Transverse colon (tissue), 4 donors: ENCODE measurements at regions of chr13 and their contacts with region 1.

Region 1: GRCh38 chr13:102773441-102774215 is at the start of gene TEX30:
- DNase-seq: peak; percentile 86
- H3K4me3 ChIP-seq: peak within 1 kb of the TSS; percentile 72 to 90 (median 82)
- H3K27ac ChIP-seq: peak within 1 kb of the TSS; percentile 81 to 92 (median 90)
- H3K4me1 ChIP-seq: peaks cover 0 to 13% (median 11%) of the 10 kb centered on the region in 4 donors
- H3K27me3 ChIP-seq: no peaks in the 10 kb centered on the region
- CTCF ChIP-seq: peak in 1 of 5 experiments; percentile 28
- EP300 ChIP-seq: no peak
- POLR2A ChIP-seq: peak; percentile 76
- total RNA-seq, gene TEX30: 5.4 to 6.0 (median 6.0) TPM in 3 of 4 donors, not detected in the other

Region 2: DNA sequence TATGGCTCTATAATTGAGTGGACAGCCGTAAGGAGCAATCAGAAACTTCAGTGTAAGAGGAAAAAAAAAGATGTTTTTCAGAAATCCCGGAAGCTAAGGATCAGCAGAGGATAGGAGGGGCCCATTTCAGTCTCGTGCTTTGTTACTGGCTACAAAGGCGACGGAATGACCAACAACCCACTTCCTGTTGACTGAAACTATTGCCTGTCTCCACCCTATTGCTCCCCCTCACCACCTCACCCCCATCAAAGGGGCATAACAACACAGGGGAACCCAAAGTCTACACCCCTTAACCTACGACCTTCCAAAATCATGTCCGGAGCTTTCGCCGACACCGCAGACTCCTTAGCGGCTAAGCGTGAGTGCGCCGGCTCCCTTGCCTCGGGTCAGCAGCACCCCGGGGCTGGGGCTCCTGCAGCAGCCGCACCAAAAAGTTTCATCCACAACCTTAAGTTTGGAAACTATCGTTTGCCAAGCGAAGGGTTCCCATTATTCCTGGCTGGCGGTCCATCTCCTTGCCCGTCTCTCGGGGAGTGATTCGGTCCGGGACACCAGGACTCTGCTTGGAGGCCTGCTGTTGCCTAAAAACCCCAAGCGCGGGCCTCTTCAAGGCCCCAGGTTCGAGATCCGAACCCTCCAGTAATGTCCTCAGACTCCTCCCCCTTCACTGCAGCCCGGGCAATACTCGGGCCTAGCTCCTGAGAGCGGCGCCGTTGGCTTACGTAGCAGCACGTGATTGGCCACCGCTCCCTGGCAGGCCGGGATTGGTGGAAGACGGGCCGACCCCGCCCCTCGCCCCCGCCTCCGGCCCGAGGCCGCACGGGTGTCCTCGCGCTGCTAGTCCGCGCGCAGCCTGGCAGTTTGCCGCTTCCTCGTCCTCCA is 177.2 kb before region 1 on chr13 and contains the start of gene TPP2:
- in situ Hi-C with region 1: no loop called
- intact Hi-C with region 1: loop called (anchors 10 kb)
- DNase-seq: peak; percentile 100
- H3K4me3 ChIP-seq: peak within 1 kb of the TSS; percentile 73 to 98 (median 88)
- H3K27ac ChIP-seq: peak within 1 kb of the TSS; percentile 96 to 99 (median 98)
- H3K4me1 ChIP-seq: peaks cover 0 to 60% (median 40%) of the 10 kb centered on the region in 4 donors
- H3K27me3 ChIP-seq: no peaks in the 10 kb centered on the region
- CTCF ChIP-seq: no peak
- EP300 ChIP-seq: no peak
- POLR2A ChIP-seq: peak; percentile 91
- total RNA-seq, gene TPP2: 19.1 to 47.8 (median 30.3) TPM

Region 3: DNA sequence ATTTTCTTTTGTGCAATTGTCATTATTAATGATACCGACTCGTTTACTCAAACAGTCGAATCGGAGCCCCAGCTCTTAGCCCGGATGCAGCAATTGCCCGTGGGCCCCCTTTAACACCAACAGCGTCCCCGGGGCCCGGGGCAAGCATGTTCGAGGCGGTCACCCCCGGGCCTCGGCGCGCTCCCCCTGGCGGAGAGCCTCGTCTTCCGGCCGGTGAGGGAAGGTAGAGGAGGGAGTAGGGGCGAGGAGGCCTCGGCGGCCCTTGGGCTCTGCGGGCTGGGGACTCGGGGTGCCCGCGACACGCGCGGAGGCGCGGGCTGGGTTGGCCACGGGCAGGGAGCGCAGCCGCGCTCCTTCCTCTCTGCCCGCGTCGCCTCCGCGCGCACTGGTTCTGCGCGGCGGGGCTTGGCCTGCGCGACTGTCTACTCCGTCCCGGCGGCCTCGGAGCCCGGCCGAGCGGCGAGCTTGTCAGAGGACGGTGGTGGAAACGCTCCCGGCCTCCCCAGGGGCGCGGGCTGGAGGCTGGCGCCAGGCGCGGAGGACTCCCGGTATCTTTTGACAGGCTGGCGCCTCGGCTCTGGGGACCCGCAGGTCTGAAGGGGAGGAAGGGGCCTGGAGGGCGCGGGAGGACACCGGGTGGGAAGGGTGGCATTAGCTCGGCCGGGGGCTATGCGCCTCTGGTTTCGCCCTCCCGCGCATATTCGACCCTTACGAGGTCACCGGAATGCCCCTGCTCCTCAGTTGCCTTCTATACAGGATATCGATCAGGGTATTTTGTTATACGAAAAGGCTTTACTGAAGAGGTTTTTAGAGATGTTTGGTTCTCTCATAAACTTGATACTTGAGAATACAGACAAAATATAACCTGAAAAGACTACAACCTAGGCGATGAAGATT is 26.8 kb after region 1 on chr13:
- in situ Hi-C with region 1: no loop called
- intact Hi-C with region 1: loop called (anchors 2 kb)
- DNase-seq: peak; percentile 87
- H3K4me3 ChIP-seq: peak overlapping the region; percentile 60 to 79 (median 64)
- H3K27ac ChIP-seq: peak overlapping the region; percentile 83 to 90 (median 84)
- H3K4me1 ChIP-seq: peaks cover 0 to 28% (median 2%) of the 10 kb centered on the region in 4 donors
- H3K27me3 ChIP-seq: no peaks in the 10 kb centered on the region
- CTCF ChIP-seq: peak; percentile 76 to 82 (median 78)
- EP300 ChIP-seq: no peak
- POLR2A ChIP-seq: peak; percentile 32